Right ventricle myocardium inferior (tissue), 1 donor: ENCODE measurements at regions of chr6 and their contacts with region 1.

Region 1: GRCh38 chr6:162727309-162728182 is at the starts of genes PACRG and PRKN:
- DNase-seq: peak; percentile 99
- ATAC-seq: peak; percentile 99
- total RNA-seq, gene PACRG: 7.9 TPM
- total RNA-seq, gene PRKN: 19.5 TPM

Region 2: DNA sequence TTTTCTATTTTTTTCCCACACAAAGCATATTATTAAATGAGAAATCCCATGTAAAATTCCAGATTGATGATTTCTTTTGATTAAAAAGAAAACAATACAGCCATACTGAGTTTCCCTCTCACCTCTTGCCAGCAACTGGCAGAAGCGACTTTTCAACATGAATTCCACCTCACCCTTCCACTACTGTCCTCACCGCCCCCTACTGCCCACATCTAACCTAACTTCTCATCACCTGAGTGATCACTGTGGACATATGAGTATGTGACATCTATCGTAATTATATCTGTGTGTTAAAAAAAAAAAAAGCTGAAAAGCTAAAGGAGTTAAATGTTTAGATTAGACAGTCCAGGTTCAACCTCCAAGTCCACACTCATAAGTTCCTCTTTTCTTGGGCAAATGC is 528.6 kb before region 1 on chr6:
- intact Hi-C with region 1: no loop called
- DNase-seq: no peak
- ATAC-seq: no peak

Region 3: DNA sequence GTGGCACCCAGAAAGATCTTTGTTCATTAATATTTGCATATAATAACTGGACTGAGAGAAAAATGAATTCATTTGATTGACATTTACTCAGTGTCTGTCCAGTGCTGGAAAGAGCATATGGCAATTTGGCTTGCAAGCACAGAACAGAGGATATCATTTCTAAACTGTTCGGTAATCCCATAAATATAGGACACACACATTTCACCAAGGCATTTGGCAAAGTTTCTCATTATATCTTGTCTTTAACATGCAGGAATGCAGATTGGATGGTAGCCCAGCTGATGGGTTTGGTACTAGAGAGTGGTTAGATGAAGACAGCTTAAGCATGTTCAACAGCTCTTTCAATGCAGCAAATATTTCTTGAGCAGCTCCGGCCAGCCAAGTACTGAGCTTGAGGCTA is 259.2 kb before region 1 on chr6:
- intact Hi-C with region 1: loop called (anchors 5 kb)
- DNase-seq: no peak
- ATAC-seq: peak; percentile 83

Region 4: DNA sequence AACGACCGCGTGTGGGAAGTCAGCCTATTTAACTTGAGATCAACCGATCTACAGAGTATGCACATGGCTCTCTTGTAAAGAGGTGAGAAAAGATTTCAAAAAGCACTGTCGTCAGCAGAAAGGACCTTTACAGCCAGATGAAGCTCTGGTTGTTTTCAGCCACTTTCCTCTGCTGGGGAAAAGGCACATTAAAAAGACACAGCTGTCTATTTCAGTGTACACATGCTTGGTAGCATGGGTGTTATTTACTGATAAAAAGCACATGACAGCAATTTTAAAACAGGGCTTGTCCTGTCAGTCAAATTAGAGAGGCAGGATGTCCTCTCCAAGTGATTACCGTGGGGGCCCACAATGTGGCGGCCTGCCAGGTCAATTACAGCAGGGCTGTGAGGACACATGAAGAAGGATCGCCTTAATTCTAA is 188.9 kb before region 1 on chr6:
- intact Hi-C with region 1: loop called (anchors 5 kb)
- DNase-seq: peak; percentile 86
- ATAC-seq: peak; percentile 86

Region 5: DNA sequence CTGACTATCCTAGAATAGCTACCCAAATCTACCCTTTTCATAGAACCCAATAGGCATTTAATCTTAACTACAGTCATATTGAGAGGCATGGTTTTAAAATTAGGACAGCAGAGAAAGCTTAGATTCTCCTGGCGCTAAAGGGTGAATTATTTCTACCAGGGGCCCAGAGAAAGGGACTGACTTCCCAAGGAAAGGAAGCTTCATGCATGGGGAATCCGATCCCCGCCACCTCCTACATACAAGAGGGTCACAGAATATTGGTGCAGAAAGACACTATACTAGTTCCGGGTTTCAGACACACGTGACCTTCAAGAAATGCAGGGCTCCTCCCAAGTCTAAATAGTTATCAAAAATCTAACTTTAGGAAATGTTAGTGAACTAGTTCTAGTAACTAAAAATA is 130.9 kb before region 1 on chr6:
- intact Hi-C with region 1: loop called (anchors 5 kb)
- DNase-seq: no peak
- ATAC-seq: no peak

Region 6: GRCh38 chr6:162612613-162613012 is 114.9 kb before region 1 on chr6:
- intact Hi-C with region 1: loop called (anchors 5 kb)
- DNase-seq: no peak
- ATAC-seq: no peak